ENCODE measurements at regions of chr3 and their contacts with region 1.

Region 1: GRCh38 chr3:13091898-13092611 is 18.8 kb upstream of the IQSEC1 start:
- DNase-seq: peak; percentile 83 to 88 (median 85)
- ATAC-seq: peak; percentile 89
- H3K4me3 ChIP-seq: no peak overlapping the region
- H3K27ac ChIP-seq: no peak overlapping the region
- H3K4me1 ChIP-seq: peaks cover 2 to 21% of the 10 kb centered on the region in 2 experiments; a peak in 3 of 5 replicates
- H3K27me3 ChIP-seq: peaks cover 17 to 40% of the 10 kb centered on the region in 2 experiments; a peak in 4 of 5 replicates
- CTCF ChIP-seq: peak; percentile 94 to 98 (median 94)
- EP300 ChIP-seq: no peak
- POLR2A ChIP-seq: no peak
- RAD21 ChIP-seq: peak; percentile 86 to 91

Region 2: DNA sequence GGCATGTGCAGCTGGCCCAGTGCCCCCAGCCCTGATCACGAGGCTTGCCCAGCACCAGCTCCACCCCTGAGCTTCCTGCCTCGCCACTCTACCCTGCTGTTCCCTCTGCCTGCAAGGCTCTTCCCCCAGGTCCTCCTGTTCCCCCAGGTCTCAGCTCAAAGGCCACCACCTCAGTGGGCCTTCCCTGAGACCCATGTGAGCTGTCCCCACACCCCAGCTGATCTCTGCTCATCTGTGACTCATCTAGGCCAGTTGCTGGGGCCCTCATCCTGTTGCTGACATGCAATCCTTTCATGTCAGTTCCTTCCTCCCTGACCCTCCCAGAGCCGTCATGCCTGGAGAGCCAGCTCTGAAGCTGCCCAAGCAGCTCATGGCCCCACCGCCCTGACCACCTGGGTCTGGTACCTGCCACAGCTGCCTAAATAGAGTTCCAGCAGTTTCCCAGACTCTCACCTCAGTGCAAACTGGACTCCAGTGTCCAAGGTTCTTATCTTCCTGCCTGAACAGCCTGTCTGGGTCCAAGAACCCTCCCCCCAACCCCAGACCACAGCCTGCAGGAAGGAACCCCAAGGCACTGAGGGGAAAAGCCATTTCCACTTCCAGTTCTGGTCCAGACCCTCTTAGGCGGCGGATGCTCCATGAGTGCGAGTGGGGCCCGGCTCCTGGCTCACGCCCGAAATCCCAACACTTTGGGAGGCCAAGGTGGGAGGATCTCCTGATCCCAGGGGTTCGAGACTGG is 97.8 kb after region 1 on chr3:
- CTCF ChIA-PET with region 1: no interaction called
- POLR2A ChIA-PET with region 1: no interaction called
- in situ Hi-C with region 1: no loop called
- intact Hi-C with region 1: loop called (anchors 10 kb)
- DNase-seq: peak in 2 of 4 experiments; percentile 26 to 35
- ATAC-seq: peak; percentile 12; the same call in 1 of the 3 replicates
- H3K4me3 ChIP-seq: no peak overlapping the region
- H3K27ac ChIP-seq: no peak overlapping the region
- H3K4me1 ChIP-seq: peaks cover 0 to 20% of the 10 kb centered on the region in 2 experiments; a peak in 3 of 5 replicates
- H3K27me3 ChIP-seq: peaks cover 54 to 81% of the 10 kb centered on the region in 2 experiments
- CTCF ChIP-seq: no peak
- EP300 ChIP-seq: no peak
- POLR2A ChIP-seq: no peak
- RAD21 ChIP-seq: no peak

Region 3: GRCh38 chr3:13282986-13283876 is 191.2 kb after region 1 on chr3:
- CTCF ChIA-PET with region 1: interaction called, 3 read pairs
- POLR2A ChIA-PET with region 1: no interaction called
- in situ Hi-C with region 1: no loop called
- intact Hi-C with region 1: loop called (anchors 2 kb)
- DNase-seq: peak; percentile 88 to 93 (median 91)
- ATAC-seq: peak; percentile 96
- H3K4me3 ChIP-seq: peak overlapping the region; percentile 34
- H3K27ac ChIP-seq: no peak overlapping the region
- H3K4me1 ChIP-seq: peaks cover 6 to 27% of the 10 kb centered on the region in 2 experiments; a peak in 4 of 5 replicates
- H3K27me3 ChIP-seq: peaks cover 13 to 52% of the 10 kb centered on the region in 2 experiments; a peak in 4 of 5 replicates
- CTCF ChIP-seq: peak; percentile 62 to 76 (median 67)
- EP300 ChIP-seq: no peak
- POLR2A ChIP-seq: no peak
- RAD21 ChIP-seq: peak in 1 of 2 experiments; percentile 63; a peak in 2 of 4 replicates

Region 4: DNA sequence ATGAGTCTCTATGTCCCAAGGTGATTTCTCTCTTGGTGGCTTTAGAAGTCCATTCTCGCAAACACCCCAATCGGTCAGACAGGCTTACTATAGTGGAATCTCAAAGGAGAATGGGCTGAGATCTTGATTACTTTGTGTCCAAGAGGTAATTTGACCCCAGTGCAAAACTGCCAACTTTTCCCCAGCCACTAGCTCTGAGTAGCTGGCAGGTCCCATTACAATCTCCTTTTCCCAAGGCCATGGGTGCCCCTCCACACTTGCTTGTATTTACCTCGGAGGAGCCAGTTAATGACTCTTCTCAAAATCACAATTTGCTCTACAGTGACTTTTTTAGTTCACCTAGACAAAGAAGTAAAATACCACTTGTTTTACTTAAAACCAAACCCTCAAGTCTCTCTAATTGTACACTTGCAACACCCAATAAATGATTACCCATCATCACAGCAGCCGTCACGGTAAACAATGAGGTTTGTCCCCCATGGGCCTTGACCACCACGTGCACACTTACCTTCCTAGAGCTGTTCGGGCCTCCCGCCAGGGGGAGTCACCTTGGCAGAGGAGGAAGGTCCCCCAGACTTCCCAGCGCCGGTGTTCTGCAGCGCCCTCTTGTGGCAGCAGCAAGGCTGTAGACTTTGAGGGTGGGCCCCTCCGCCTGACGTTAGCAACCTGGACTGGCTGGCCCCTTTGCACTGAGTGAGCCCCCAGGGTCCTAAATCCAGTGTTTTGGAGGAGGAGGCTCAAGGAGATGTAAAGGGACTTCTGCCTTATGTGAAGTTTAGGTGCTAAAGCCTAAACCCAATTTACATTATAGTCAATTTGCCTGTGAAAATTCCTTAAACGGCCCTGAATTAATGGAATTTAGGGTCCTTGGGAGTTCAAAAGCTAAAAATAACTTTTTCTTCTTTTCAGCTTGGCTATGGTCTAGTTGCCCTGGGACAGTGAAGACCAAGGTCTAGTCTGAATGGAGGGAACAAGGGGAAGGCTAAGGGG is 369.4 kb after region 1 on chr3:
- CTCF ChIA-PET with region 1: interaction called, 3 read pairs
- POLR2A ChIA-PET with region 1: no interaction called
- in situ Hi-C with region 1: loop called (anchors 5 kb)
- intact Hi-C with region 1: loop called (anchors 2 kb)
- DNase-seq: peak; percentile 90 to 95 (median 94)
- ATAC-seq: peak; percentile 98
- H3K4me3 ChIP-seq: no peak overlapping the region
- H3K27ac ChIP-seq: no peak overlapping the region
- H3K4me1 ChIP-seq: peaks cover 4 to 14% of the 10 kb centered on the region in 2 experiments; a peak in 4 of 5 replicates
- H3K27me3 ChIP-seq: peaks cover 6 to 25% of the 10 kb centered on the region in 2 experiments; a peak in 3 of 5 replicates
- CTCF ChIP-seq: peak; percentile 94 to 99 (median 98)
- EP300 ChIP-seq: no peak
- POLR2A ChIP-seq: no peak
- RAD21 ChIP-seq: peak; percentile 79 to 91

Measured in K562 (cell line).